A549 (cell line): ENCODE measurements at regions of chr1 and their contacts with region 1.

Region 1: GRCh38 chr1:48019714-48020315 is 22.6 kb upstream of the TRABD2B start:
- DNase-seq: no peak
- ATAC-seq: no peak
- H3K4me3 ChIP-seq: no peak overlapping the region
- H3K27ac ChIP-seq: no peak overlapping the region
- H3K4me1 ChIP-seq: no peaks in the 10 kb centered on the region
- CTCF ChIP-seq: no peak
- EP300 ChIP-seq: no peak
- POLR2A ChIP-seq: no peak
- RAD21 ChIP-seq: no peak

Region 2: GRCh38 chr1:47650197-47650596 is 369.6 kb before region 1 on chr1:
- CTCF ChIA-PET with region 1: no interaction called
- POLR2A ChIA-PET with region 1: no interaction called
- DNase-seq: peak; percentile 71 to 87
- ATAC-seq: peak; percentile 97
- H3K4me3 ChIP-seq: no peak overlapping the region
- H3K27ac ChIP-seq: peak overlapping the region; percentile 76 to 83
- H3K4me1 ChIP-seq: peaks cover 23% of the 10 kb centered on the region
- CTCF ChIP-seq: no peak
- EP300 ChIP-seq: peak in 1 of 2 experiments; percentile 32; a peak in 1 of 5 replicates
- POLR2A ChIP-seq: no peak
- RAD21 ChIP-seq: no peak; a peak in 1 of 5 replicates

Region 3: GRCh38 chr1:47997289-47998200 is 22.3 kb before region 1 on chr1 and contains the start of gene TRABD2B:
- CTCF ChIA-PET with region 1: interaction called, 10 read pairs
- POLR2A ChIA-PET with region 1: no interaction called
- DNase-seq: peak; percentile 63 to 74
- ATAC-seq: peak; percentile 78 to 91
- H3K4me3 ChIP-seq: peak within 1 kb of the TSS; percentile 83
- H3K27ac ChIP-seq: peak within 1 kb of the TSS; percentile 75 to 96
- H3K4me1 ChIP-seq: no peaks in the 10 kb centered on the region
- CTCF ChIP-seq: peak; percentile 74
- EP300 ChIP-seq: no peak
- POLR2A ChIP-seq: no peak
- RAD21 ChIP-seq: peak; percentile 50 to 68
- polyA plus RNA-seq, gene TRABD2B: 0.03 and 0.04 TPM in 2 replicates

Region 4: DNA sequence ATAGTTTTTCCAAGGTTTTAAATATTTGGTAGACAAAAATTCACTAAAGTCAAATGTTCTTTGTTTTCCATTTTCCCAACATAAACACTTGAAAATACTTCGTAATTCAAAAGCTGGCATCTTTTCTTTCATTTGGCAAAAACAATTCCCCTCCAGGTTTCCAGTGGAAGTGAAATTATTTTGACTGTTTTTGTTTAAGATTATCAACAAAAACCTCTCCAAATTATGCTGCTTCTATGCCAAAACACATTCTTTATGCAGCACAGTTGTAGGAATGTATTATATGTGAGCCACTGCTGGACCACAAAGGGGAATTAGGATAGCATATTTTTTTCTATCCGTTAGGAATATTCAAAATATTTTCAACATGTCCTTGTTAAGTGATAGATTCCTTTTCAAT is 246.8 kb after region 1 on chr1:
- CTCF ChIA-PET with region 1: no interaction called
- POLR2A ChIA-PET with region 1: no interaction called
- DNase-seq: no peak
- ATAC-seq: no peak
- H3K4me3 ChIP-seq: no peak overlapping the region
- H3K27ac ChIP-seq: no peak overlapping the region
- H3K4me1 ChIP-seq: no peaks in the 10 kb centered on the region
- CTCF ChIP-seq: no peak
- EP300 ChIP-seq: no peak
- POLR2A ChIP-seq: no peak
- RAD21 ChIP-seq: no peak